ENCODE measurements at regions of chr6 and their contacts with region 1.

Region 1: DNA sequence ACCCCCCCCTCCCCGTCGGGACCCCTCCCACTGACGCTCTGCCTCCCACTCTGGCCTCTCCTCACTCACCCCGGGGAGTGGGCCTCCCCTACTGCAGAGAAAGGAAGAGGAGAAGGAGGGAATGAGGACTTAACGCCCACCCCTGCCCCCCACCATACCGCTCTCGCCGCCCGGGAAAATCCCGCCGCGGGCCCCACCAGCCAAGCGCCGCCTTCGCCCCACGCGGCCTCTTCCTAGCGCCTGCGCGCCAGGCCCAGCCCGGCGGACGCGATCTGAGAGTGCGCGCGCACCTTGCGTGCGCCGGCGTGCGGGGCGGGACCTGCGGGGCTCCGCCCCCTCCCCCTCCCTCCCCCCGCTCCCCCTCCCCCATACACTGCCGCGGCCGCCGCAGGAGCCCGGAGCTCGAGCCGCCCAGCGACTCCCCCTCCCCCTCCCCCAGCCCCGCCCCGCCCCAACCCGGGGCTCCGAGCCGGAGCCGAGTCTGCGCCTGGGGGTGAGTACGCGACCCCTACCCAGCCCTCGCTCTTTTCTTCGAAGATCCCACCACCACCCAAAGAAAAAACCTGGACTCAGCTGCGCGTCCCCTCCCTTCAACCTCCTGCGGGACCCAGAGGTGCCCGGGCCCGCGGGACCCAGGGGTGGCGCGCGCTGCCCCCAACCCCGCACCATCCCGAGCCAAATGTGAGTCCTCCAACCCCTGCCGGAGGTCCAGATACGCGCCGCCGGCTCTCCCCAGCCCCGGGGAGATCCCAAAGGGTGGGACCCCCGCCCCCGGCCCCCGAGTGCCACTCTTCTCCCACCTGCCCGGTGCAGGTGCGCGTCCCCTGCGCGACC is at the starts of genes MRPL14 and TMEM63B:
- DNase-seq: peak; percentile 82 to 92
- H3K4me3 ChIP-seq: peak within 1 kb of the TSS; percentile 85
- H3K4me3 Mint-ChIP-seq: peak within 1 kb of the TSS; percentile 94
- H3K27ac Mint-ChIP-seq: peak within 1 kb of the TSS; percentile 80
- H3K4me1 ChIP-seq: peaks cover 18% of the 10 kb centered on the region; the same call in 1 of the 2 replicates
- H3K4me1 Mint-ChIP-seq: peaks cover 37% of the 10 kb centered on the region
- H3K27me3 ChIP-seq: no peaks in the 10 kb centered on the region
- H3K27me3 Mint-ChIP-seq: no peaks in the 10 kb centered on the region
- CTCF ChIP-seq: no peak
- total RNA-seq, gene MRPL14: 87.6 and 92.2 TPM in 2 replicates
- total RNA-seq, gene TMEM63B: 28.2 and 28.4 TPM in 2 replicates

Region 2: GRCh38 chr6:44111434-44112417 is 15.7 kb before region 1 on chr6:
- CTCF ChIA-PET with region 1: interaction called, 7 read pairs
- POLR2A ChIA-PET with region 1: interaction called, 11 read pairs
- intact Hi-C with region 1: loop called (anchors 1 kb)
- DNase-seq: peak; percentile 46 to 73
- H3K4me3 ChIP-seq: no peak overlapping the region
- H3K4me3 Mint-ChIP-seq: peak overlapping the region; percentile 27
- H3K27ac Mint-ChIP-seq: peak overlapping the region; percentile 91
- H3K4me1 ChIP-seq: peaks cover 3% of the 10 kb centered on the region
- H3K4me1 Mint-ChIP-seq: peaks cover 28% of the 10 kb centered on the region
- H3K27me3 ChIP-seq: no peaks in the 10 kb centered on the region
- H3K27me3 Mint-ChIP-seq: no peaks in the 10 kb centered on the region
- CTCF ChIP-seq: no peak

Region 3: GRCh38 chr6:44156494-44157151 is 29.2 kb after region 1 on chr6:
- CTCF ChIA-PET with region 1: no interaction called
- POLR2A ChIA-PET with region 1: interaction called, 3 read pairs
- intact Hi-C with region 1: loop called (anchors 1 kb)
- DNase-seq: peak; percentile 68 to 83
- H3K4me3 ChIP-seq: no peak overlapping the region
- H3K4me3 Mint-ChIP-seq: peak overlapping the region; percentile 15
- H3K27ac Mint-ChIP-seq: peak overlapping the region; percentile 50
- H3K4me1 ChIP-seq: peaks cover 17% of the 10 kb centered on the region
- H3K4me1 Mint-ChIP-seq: peaks cover 13% of the 10 kb centered on the region
- H3K27me3 ChIP-seq: no peaks in the 10 kb centered on the region
- H3K27me3 Mint-ChIP-seq: no peaks in the 10 kb centered on the region
- CTCF ChIP-seq: no peak

Region 4: GRCh38 chr6:44237813-44238433 is 110.5 kb after region 1 on chr6:
- CTCF ChIA-PET with region 1: interaction called, 12 read pairs
- POLR2A ChIA-PET with region 1: interaction called, 3 read pairs
- intact Hi-C with region 1: no loop called
- DNase-seq: peak; percentile 69 to 90
- H3K4me3 ChIP-seq: peak overlapping the region; percentile 58
- H3K4me3 Mint-ChIP-seq: peak overlapping the region; percentile 89
- H3K27ac Mint-ChIP-seq: peak overlapping the region; percentile 95
- H3K4me1 ChIP-seq: peaks cover 19% of the 10 kb centered on the region
- H3K4me1 Mint-ChIP-seq: peaks cover 17% of the 10 kb centered on the region
- H3K27me3 ChIP-seq: no peaks in the 10 kb centered on the region
- H3K27me3 Mint-ChIP-seq: no peaks in the 10 kb centered on the region
- CTCF ChIP-seq: peak; percentile 92 to 93